ENCODE measurements at regions of chr1 and their contacts with region 1.

Region 1: GRCh38 chr1:203871107-203871875 is 9.9 kb downstream of the SNRPE start:
- DNase-seq: peak in 9 of 35 experiments; percentile 3 to 54 (median 11)
- ATAC-seq: peak in 2 of 4 experiments; percentile 31 to 59
- H3K4me3 ChIP-seq: no peak overlapping the region
- H3K4me3 Mint-ChIP-seq: no peak overlapping the region
- H3K27ac ChIP-seq: no peak overlapping the region
- H3K27ac Mint-ChIP-seq: peak overlapping the region in 1 of 2 donors; percentile 49
- H3K4me1 ChIP-seq: no peaks in the 10 kb centered on the region
- H3K4me1 Mint-ChIP-seq: peaks cover 0 to 6% (median 3%) of the 10 kb centered on the region in 3 donors
- H3K27me3 ChIP-seq: no peaks in the 10 kb centered on the region
- H3K27me3 Mint-ChIP-seq: no peaks in the 10 kb centered on the region

Region 2: GRCh38 chr1:203926025-203926540 is 54.8 kb after region 1 on chr1:
- CTCF ChIA-PET with region 1: no interaction called
- POLR2A ChIA-PET with region 1: no interaction called
- DNase-seq: no peak
- ATAC-seq: no peak
- H3K4me3 ChIP-seq: no peak overlapping the region
- H3K4me3 Mint-ChIP-seq: no peak overlapping the region
- H3K27ac ChIP-seq: no peak overlapping the region
- H3K27ac Mint-ChIP-seq: no peak overlapping the region
- H3K4me1 ChIP-seq: no peaks in the 10 kb centered on the region
- H3K4me1 Mint-ChIP-seq: peaks cover 4 to 5% (median 5%) of the 10 kb centered on the region in 3 donors
- H3K27me3 ChIP-seq: peaks cover 0 to 2% of the 10 kb centered on the region in 2 experiments
- H3K27me3 Mint-ChIP-seq: peaks cover 2 to 7% of the 10 kb centered on the region in 2 donors

Region 3: DNA sequence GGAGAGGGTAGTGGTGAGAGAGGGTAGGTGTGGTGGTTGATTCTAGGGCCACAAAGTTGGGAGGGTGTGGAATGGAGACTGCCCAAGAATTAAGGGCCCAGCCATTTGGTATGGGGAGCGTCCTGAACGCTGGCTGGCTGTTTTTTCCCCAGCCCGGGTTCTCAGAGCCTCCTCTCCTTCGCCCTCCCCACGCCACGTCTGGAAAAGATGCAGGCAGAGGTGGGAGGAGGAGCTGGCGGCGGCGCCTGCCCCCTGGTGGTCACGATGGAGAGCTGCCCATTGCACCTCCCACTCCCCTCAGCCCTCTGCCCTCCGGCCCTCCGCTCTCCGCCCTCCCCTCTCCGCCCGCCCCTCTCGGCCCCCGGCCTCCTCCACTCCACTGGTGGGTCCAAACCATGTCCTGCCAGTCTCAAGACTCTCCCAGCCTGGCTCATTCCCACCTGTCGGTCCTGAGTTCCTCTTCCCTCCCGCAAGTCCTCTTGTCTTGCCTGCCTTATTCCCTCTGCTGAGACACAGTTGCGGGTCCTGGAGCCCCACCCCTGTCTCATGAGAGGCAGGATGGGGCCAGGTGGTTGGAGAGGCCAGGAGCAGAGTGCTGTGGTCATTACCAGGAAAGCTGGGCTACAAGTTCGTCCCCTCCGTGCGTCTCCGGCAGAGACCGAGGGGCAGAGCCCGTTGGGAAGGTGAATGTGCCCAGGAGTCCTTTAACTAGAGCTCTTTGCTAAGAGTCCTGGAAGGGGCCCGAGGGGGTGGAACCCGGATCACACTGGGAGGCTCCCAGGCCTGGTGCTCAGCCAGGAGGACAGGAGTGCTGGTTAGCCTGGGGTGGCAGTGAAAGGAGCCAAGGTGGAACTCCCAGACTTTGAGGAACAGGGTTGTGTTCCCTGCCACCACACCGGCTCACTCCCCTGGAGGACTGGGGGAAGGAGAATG is 257.9 kb after region 1 on chr1:
- CTCF ChIA-PET with region 1: interaction called, 3 to 24 read pairs
- POLR2A ChIA-PET with region 1: no interaction called
- DNase-seq: peak in 32 of 35 experiments; percentile 24 to 82 (median 48)
- ATAC-seq: peak; percentile 84 to 92 (median 86)
- H3K4me3 ChIP-seq: no peak overlapping the region
- H3K4me3 Mint-ChIP-seq: peak overlapping the region in 1 of 3 donors; percentile 6
- H3K27ac ChIP-seq: no peak overlapping the region
- H3K27ac Mint-ChIP-seq: no peak overlapping the region
- H3K4me1 ChIP-seq: peaks cover 0 to 8% of the 10 kb centered on the region in 2 experiments
- H3K4me1 Mint-ChIP-seq: peaks cover 4 to 11% (median 6%) of the 10 kb centered on the region in 3 donors
- H3K27me3 ChIP-seq: peaks cover 0 to 17% of the 10 kb centered on the region in 2 experiments
- H3K27me3 Mint-ChIP-seq: no peaks in the 10 kb centered on the region

Measured in T-cell (primary cell).